GM10248 (cell line): ENCODE measurements at regions of chr7 and their contacts with region 1.

Region 1: DNA sequence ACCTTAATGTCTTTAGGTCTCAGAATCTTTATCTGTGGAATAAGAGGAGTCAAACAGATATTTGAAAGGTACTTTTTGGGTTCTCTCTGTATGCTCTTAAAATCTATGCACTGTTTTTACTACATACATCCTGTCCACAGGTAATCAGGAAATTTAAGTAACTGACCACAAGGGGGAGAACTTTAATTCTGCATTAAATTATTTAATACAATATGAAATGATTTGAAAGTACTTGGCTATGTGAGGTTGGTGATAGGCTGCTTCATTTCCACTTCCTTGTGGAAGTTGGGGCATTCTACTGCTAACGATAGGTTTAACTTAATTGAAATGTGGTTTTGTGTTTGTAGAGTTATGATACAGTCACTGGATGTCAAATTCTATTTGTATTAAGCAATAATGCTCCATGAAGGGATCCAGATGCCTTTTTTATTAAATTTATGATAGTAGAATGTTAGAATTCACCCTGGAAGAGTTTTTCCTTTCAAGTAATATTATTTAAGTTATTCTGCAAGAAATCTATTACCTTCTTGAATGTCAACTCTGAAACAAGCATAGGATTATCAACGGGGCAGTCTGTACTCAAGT is 6.0 kb downstream of the TEX47 start:
- DNase-seq: no peak
- CTCF ChIP-seq: peak; percentile 38

Region 2: GRCh38 chr7:88165706-88166105 is 623.9 kb before region 1 on chr7:
- CTCF ChIA-PET with region 1: no interaction called
- POLR2A ChIA-PET with region 1: no interaction called
- DNase-seq: no peak
- CTCF ChIP-seq: no peak

Region 3: GRCh38 chr7:88758381-88759229 is 31.0 kb before region 1 on chr7:
- CTCF ChIA-PET with region 1: no interaction called
- POLR2A ChIA-PET with region 1: no interaction called
- DNase-seq: peak; percentile 12
- CTCF ChIP-seq: no peak

Region 4: DNA sequence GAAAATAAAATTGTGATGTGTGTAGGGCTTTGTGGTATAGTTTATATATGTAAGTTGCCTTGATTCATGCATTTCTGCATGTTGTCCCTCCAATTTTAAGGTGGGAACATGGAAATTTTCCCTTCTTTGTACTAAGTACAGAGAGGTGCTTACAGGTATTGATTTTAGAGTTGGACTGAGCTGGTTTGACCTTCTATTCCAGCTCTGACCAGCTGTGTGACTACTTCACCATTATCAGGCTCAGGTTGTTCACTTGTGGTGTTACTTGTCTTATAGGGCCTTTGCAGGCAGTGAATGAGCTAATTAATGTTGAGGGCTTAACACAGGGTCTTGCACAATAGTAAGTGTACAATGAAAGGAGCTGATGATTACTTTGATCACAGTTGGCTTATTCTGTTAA is 13.7 kb before region 1 on chr7:
- CTCF ChIA-PET with region 1: interaction called, 10 read pairs
- POLR2A ChIA-PET with region 1: no interaction called
- DNase-seq: no peak
- CTCF ChIP-seq: no peak

Region 5: DNA sequence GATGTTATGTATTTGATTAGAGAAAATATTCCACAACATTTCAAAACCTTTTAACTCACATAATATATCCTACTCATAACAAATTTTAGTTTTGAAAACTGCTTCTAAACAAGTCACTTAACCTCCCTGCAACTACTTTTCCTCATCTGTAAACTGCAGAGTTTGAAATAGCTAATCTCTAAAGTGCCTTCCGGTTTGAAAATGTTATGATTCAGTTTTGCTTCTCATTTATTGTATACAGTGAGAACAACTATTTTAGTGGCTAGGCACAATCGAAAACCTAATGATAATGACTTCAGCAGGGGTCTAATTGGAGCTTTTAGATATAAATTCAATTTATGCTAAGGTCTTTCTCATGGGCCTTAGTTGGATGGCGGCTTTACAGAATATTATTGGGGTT is 36.6 kb after region 1 on chr7:
- CTCF ChIA-PET with region 1: interaction called, 11 read pairs
- POLR2A ChIA-PET with region 1: no interaction called
- DNase-seq: no peak
- CTCF ChIP-seq: no peak

Region 6: GRCh38 chr7:88942815-88943501 is 153.4 kb after region 1 on chr7:
- CTCF ChIA-PET with region 1: no interaction called
- POLR2A ChIA-PET with region 1: no interaction called
- DNase-seq: no peak
- CTCF ChIP-seq: no peak